MCF 10A (cell line): ENCODE measurements at regions of chr13 and their contacts with region 1.

Region 1: GRCh38 chr13:46603165-46603603 is 50.2 kb downstream of the LRCH1 start:
- DNase-seq: peak; percentile 29
- H3K4me3 Mint-ChIP-seq: no peak overlapping the region
- H3K27ac Mint-ChIP-seq: peak overlapping the region; percentile 75
- H3K4me1 Mint-ChIP-seq: peaks cover 46% of the 10 kb centered on the region
- H3K27me3 Mint-ChIP-seq: no peaks in the 10 kb centered on the region
- CTCF ChIP-seq: no peak

Region 2: DNA sequence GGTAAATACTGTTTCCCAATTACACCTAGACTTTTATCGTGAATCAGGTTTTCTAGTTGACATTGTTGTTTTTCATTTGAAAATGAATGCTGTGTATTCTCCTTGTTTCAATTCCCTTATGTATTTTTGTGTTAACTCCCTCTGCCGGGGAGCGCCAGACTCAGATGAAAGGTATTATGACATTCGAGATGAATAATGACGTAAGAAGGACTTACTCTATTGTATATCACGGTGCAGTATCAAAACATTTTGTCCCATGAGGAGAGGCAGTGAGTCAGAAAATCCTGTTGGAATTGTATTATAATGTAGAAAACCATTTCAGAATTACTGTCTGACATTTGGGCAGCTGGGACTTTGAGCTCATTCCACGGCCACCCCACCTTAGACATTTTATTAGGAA is 11.4 kb after region 1 on chr13:
- CTCF ChIA-PET with region 1: interaction called, 14 read pairs
- POLR2A ChIA-PET with region 1: interaction called, 12 read pairs
- intact Hi-C with region 1: no loop called
- DNase-seq: peak; percentile 76
- H3K4me3 Mint-ChIP-seq: no peak overlapping the region
- H3K27ac Mint-ChIP-seq: peak overlapping the region; percentile 47
- H3K4me1 Mint-ChIP-seq: peaks cover 40% of the 10 kb centered on the region
- H3K27me3 Mint-ChIP-seq: no peaks in the 10 kb centered on the region
- CTCF ChIP-seq: no peak